ENCODE measurements at regions of chr3 and their contacts with region 1.

Region 1: DNA sequence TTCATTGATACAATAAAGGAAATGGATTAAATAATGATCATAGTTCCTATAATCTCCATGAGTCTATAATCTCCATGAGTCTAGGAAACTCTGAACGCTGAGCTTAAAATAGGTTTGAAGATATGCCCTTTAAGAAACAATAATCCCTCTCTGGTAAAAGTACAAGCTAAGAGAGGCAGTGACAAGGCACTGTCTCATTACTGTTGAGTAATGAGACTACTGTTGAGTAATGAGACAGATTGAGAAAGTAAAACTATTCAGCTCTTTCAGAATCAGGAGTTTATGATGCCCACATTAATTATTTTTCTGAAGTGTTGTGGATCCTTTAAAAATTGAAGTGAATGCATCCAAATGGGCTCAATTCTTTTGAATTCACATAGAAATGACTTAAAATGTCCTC is 235.5 kb upstream of the THRB start:
- DNase-seq: no peak
- H3K4me3 ChIP-seq: no peak overlapping the region
- H3K27ac ChIP-seq: no peak overlapping the region
- H3K4me1 ChIP-seq: no peaks in the 10 kb centered on the region
- H3K27me3 ChIP-seq: no peaks in the 10 kb centered on the region
- CTCF ChIP-seq: no peak
- POLR2A ChIP-seq: no peak

Region 2: GRCh38 chr3:24714436-24714835 is 15.7 kb before region 1 on chr3:
- intact Hi-C with region 1: loop called (anchors 1 kb)
- DNase-seq: no peak
- H3K4me3 ChIP-seq: no peak overlapping the region
- H3K27ac ChIP-seq: no peak overlapping the region
- H3K4me1 ChIP-seq: no peaks in the 10 kb centered on the region
- H3K27me3 ChIP-seq: no peaks in the 10 kb centered on the region
- CTCF ChIP-seq: no peak
- POLR2A ChIP-seq: no peak

Region 3: GRCh38 chr3:24763415-24763814 is 33.2 kb after region 1 on chr3:
- intact Hi-C with region 1: no loop called
- DNase-seq: no peak
- H3K4me3 ChIP-seq: no peak overlapping the region
- H3K27ac ChIP-seq: no peak overlapping the region
- H3K4me1 ChIP-seq: no peaks in the 10 kb centered on the region
- H3K27me3 ChIP-seq: no peaks in the 10 kb centered on the region
- CTCF ChIP-seq: no peak
- POLR2A ChIP-seq: no peak

Measured in breast epithelium (tissue), 4 donors.